Endothelial cell of umbilical vein (primary cell): ENCODE measurements at regions of chr15 and their contacts with region 1.

Region 1: DNA sequence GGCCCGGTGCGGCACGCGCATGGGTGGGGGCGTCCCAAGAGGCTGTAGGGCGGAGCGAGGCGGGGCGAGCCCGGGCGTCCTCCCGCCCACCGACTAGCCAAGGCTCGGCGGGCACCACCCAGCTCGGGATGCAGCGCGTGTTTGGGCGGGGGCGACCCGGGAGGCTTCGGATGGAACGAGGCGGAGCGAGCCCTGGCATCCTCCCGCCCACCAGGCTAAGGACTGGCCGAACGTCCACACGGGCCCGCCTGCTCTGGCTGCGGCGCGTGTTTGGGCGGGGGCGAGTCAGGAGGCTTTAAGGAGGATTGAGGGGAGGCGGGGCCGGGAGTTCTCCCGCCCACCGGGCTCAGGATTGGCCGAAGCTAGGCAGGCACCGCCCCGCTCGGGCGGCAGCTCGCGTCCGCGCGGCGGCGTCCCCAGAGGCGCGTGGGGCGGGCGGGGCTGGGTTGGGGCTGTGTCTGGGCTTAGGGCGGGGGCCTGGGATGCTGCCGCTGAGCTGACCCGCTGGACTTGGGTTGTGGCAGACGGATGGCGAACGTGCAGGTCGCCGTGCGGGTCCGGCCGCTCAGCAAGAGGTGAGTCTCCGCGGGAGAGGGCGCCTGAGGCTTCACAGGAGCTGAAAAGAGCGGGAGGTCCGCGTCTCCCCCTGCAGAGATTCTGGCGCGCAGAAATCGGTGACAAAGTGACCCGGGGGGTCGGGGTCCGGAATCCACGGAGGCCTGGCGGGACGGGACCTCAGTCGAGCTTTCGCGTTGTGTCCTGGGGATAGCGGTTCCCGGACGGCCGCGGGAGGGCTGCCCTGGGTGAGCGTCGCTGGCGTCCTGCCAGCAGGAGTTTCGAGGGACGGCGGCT is at the start of gene STARD9:
- DNase-seq: peak; percentile 99
- H3K4me3 ChIP-seq: peak within 1 kb of the TSS; percentile 64 to 79 (median 77)
- H3K27ac ChIP-seq: peak within 1 kb of the TSS; percentile 55
- H3K4me1 ChIP-seq: peaks cover 11% of the 10 kb centered on the region
- H3K27me3 ChIP-seq: no peaks in the 10 kb centered on the region
- CTCF ChIP-seq: no peak
- POLR2A ChIP-seq: peak; percentile 47
- total RNA-seq, gene STARD9: 17.2 and 17.5 TPM in 2 replicates

Region 2: DNA sequence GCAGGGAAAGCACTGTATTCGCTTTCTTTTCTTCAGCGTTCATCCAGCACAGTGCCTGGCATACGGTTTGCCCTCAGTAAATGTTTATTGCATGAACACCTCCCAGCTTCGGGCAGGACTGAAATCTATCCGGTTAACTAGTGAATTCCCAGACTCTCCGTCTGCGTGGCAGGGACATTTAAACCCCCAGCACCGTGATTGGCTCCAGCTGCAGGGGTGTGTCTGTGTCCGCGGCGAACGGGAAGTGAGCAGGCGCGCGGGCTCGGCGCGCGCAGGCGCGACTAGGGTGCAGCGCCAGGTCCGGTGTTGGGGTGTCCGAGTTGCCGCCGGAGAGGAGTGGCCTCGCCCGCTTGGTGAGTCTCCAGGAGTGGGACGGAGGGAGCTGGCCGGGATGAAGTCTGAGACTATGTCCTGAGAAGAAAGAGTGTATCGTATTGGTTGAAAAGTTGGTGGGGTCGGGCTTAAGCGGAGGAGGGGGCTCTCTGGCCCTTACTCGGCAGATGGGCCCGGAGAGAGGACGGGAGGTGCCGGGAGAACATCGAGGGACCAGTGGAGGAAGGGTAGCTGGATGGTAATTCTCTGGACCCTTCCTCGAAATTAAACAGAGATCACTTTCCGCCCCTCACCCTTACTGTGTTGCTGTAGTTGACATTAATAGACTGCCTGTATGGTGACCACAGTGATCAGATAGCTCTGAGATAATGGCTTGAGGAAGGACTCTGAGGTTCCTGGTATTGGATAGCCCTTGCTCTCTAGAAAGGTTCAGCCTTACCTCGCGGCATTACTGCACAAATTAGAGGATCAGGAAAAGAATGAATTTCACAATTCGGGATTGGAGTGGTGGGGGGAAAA is 79.8 kb before region 1 on chr15 and contains the start of gene SNAP23:
- CTCF ChIA-PET with region 1: no interaction called
- POLR2A ChIA-PET with region 1: interaction called, 5 read pairs
- dilution Hi-C with region 1: no loop called
- intact Hi-C with region 1: loop called (anchors 2 kb)
- DNase-seq: peak; percentile 98
- H3K4me3 ChIP-seq: peak within 1 kb of the TSS; percentile 66 to 98 (median 71)
- H3K27ac ChIP-seq: peak within 1 kb of the TSS; percentile 95
- H3K4me1 ChIP-seq: peaks cover 65% of the 10 kb centered on the region
- H3K27me3 ChIP-seq: no peaks in the 10 kb centered on the region
- CTCF ChIP-seq: no peak
- POLR2A ChIP-seq: peak; percentile 59
- total RNA-seq, gene SNAP23: 126 and 141 TPM in 2 replicates

Region 3: DNA sequence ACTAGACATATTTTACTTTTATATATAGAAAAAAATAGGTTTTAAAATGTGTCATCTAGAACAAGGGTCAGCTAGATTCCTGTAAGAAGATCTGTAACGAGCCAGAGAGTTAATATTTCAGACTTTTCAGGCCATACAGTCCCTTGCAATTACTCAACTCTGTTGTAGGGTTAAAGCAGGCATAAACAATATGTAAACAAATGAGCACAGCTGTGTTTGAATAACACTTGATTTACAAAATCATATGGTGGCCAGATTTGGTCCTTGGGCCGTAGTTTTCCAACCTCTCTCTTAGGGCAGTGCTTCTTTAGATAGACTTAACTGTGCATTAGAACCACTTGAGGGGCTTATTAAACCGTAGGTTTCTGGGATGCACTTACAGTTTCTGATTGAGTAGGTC is 46.4 kb before region 1 on chr15:
- CTCF ChIA-PET with region 1: no interaction called
- POLR2A ChIA-PET with region 1: no interaction called
- dilution Hi-C with region 1: no loop called
- intact Hi-C with region 1: no loop called
- DNase-seq: no peak
- H3K4me3 ChIP-seq: no peak overlapping the region
- H3K27ac ChIP-seq: no peak overlapping the region
- H3K4me1 ChIP-seq: no peaks in the 10 kb centered on the region
- H3K27me3 ChIP-seq: no peaks in the 10 kb centered on the region
- CTCF ChIP-seq: no peak
- POLR2A ChIP-seq: no peak

Region 4: DNA sequence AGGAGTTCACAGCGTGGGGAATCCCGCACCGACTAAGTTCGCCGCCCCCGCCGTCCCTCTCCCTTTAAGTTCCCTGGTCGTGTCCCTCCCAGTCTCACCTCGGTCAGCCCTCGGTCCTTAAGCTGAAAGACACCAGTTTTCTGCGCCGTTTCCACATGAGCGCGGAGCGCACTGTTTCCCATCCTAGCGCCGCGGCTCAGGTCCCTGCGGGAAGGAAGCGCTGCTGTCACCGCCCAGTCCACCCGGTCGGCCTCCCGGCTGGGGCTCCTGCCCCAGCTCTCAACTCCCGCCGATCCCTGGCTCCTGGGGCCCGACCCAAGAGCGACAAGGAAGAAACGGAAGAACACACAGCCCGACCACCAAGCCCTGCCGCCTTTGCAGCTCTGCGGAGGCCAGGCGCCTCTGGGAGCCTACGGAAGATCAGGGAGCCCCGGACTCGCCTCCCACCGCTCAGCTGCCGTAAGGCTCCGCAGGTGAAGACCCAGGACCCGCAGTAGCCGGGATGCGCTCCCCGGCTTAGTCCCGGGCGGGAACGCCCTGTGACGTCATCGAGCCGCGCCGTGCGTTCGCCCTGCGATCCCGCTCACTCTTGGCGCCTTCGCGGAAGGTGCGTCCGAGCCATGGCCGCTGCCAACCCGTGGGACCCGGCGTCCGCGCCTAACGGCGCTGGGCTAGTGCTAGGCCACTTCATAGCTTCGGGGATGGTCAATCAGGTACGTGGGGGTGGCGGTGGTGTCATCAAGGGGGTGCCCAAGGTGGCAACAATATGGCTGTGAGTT is 27.0 kb before region 1 on chr15 and contains the starts of genes HAUS2 and LRRC57:
- CTCF ChIA-PET with region 1: interaction called, 4 read pairs
- POLR2A ChIA-PET with region 1: interaction called, 3 read pairs
- dilution Hi-C with region 1: no loop called
- intact Hi-C with region 1: loop called (anchors 1 kb)
- DNase-seq: peak; percentile 88
- H3K4me3 ChIP-seq: peak within 1 kb of the TSS; percentile 65 to 96 (median 89)
- H3K27ac ChIP-seq: peak within 1 kb of the TSS; percentile 41
- H3K4me1 ChIP-seq: peaks cover 27% of the 10 kb centered on the region
- H3K27me3 ChIP-seq: no peaks in the 10 kb centered on the region
- CTCF ChIP-seq: no peak
- POLR2A ChIP-seq: peak; percentile 95
- total RNA-seq, gene HAUS2: 33.5 and 37.8 TPM in 2 replicates
- total RNA-seq, gene LRRC57: 32.8 and 39.2 TPM in 2 replicates

Region 5: GRCh38 chr15:42604894-42605744 is 29.7 kb after region 1 on chr15:
- CTCF ChIA-PET with region 1: no interaction called
- POLR2A ChIA-PET with region 1: no interaction called
- dilution Hi-C with region 1: no loop called
- intact Hi-C with region 1: loop called (anchors 2 kb)
- DNase-seq: peak; percentile 81
- H3K4me3 ChIP-seq: peak overlapping the region in 1 of 3 experiments; percentile 8
- H3K27ac ChIP-seq: peak overlapping the region; percentile 53
- H3K4me1 ChIP-seq: peaks cover 14% of the 10 kb centered on the region
- H3K27me3 ChIP-seq: no peaks in the 10 kb centered on the region
- CTCF ChIP-seq: no peak
- POLR2A ChIP-seq: no peak

Region 6: DNA sequence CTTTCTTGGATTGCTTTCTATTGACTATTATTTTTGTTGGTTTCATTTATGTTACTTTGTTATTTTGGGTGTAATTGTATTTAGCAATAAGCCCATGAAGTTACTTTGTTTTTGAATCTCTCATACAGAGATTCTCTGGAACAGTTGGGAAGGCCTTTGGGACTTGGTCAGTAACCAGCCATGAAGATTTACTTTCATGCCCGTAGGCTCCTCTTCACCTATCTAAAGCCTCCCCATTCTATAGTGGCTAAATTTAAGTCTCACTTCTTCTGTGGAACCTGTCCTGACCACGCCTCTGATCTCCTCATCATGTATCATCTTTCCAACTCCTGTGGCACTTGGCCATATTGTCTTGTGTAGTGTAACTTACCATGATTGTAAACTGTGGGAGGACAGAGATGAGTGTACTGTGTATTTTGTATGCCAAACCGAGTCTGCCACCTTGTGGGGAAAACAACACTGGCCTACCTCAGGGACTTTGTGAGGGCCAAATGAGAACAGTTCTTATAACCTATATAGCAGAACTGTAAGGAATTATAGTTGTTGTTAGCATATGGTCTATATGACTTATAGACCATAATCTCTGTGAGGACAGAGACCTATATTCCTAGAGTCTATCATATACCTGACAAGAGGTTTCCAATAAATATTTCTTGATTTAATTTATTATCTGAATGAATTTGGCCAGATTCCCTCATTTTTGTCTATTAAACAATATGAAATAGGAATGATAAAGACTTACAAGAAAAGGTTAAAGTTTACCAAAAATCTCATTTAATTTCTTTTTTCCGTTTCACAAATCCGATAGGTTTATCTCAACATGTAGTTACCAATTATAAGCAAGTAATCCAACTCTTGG is 75.0 kb after region 1 on chr15:
- CTCF ChIA-PET with region 1: interaction called, 11 read pairs
- POLR2A ChIA-PET with region 1: no interaction called
- dilution Hi-C with region 1: no loop called
- intact Hi-C with region 1: loop called (anchors 2 kb)
- DNase-seq: peak; percentile 87
- H3K4me3 ChIP-seq: no peak overlapping the region
- H3K27ac ChIP-seq: no peak overlapping the region
- H3K4me1 ChIP-seq: no peaks in the 10 kb centered on the region
- H3K27me3 ChIP-seq: no peaks in the 10 kb centered on the region
- CTCF ChIP-seq: peak; percentile 69 to 79
- POLR2A ChIP-seq: no peak